Panc1 (cell line): ENCODE measurements at regions of chr3 and their contacts with region 1.

Region 1: GRCh38 chr3:96538186-96538585 is 276.2 kb upstream of the EPHA6 start:
- DNase-seq: no peak
- ATAC-seq: no peak
- H3K4me3 ChIP-seq: no peak overlapping the region
- H3K27ac ChIP-seq: no peak overlapping the region
- H3K4me1 ChIP-seq: no peaks in the 10 kb centered on the region
- H3K27me3 ChIP-seq: no peaks in the 10 kb centered on the region
- CTCF ChIP-seq: no peak

Region 2: DNA sequence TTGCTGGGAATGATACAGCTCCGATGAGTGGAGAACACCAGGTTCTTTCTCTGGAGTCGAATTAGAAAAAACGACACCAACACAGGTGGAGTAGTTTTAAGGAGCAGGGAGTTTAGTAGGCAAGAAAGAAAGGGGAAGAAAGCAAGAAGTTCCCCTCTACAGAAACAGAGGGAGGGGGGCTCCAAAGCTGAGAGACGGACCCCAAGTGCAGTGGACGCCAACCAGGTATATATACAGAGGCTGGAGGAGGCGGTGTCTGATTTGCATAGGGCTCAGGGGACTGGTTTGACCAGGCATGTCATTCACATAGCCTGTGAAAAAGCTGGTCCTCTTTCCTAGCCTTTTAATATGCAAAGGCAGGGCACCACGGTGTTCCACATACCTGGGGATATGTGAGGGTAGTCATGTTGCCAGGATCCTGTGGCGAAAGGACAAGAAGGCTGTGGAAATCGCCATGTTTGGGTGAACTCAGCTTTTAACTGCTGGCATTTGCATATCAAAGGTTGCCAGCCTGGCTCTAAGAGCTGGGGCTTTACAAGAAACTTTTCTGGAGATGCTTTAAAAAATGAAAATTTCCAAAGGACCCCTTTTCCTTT is 611.2 kb before region 1 on chr3:
- CTCF ChIA-PET with region 1: no interaction called
- POLR2A ChIA-PET with region 1: no interaction called
- in situ Hi-C with region 1: no loop called
- intact Hi-C with region 1: no loop called
- DNase-seq: no peak
- ATAC-seq: no peak
- H3K4me3 ChIP-seq: no peak overlapping the region
- H3K27ac ChIP-seq: no peak overlapping the region
- H3K4me1 ChIP-seq: no peaks in the 10 kb centered on the region
- H3K27me3 ChIP-seq: no peaks in the 10 kb centered on the region
- CTCF ChIP-seq: no peak

Region 3: DNA sequence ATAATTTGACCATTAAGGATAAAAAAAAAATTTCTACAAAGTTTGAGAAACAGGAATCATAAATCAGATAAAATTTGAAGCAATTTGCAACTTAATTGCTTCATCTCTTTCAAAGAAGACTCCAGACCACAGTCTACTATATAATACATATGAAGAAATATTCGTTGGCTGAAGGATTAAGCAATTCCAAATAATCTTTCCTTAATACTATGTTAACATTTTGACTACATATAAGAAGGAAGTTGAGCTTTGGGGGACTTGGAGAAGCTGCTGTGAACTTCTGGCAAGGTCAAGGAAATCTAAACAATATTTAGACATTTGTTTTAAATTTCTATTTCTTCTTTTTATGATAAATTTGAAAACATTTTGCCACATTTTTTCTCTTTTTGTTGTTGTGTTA is 1510.4 kb after region 1 on chr3:
- CTCF ChIA-PET with region 1: interaction called, 13 read pairs
- POLR2A ChIA-PET with region 1: no interaction called
- in situ Hi-C with region 1: no loop called
- intact Hi-C with region 1: no loop called
- DNase-seq: no peak
- ATAC-seq: no peak
- H3K4me3 ChIP-seq: no peak overlapping the region
- H3K27ac ChIP-seq: no peak overlapping the region
- H3K4me1 ChIP-seq: no peaks in the 10 kb centered on the region
- H3K27me3 ChIP-seq: no peaks in the 10 kb centered on the region; the same call in 1 of the 2 replicates
- CTCF ChIP-seq: no peak

Region 4: DNA sequence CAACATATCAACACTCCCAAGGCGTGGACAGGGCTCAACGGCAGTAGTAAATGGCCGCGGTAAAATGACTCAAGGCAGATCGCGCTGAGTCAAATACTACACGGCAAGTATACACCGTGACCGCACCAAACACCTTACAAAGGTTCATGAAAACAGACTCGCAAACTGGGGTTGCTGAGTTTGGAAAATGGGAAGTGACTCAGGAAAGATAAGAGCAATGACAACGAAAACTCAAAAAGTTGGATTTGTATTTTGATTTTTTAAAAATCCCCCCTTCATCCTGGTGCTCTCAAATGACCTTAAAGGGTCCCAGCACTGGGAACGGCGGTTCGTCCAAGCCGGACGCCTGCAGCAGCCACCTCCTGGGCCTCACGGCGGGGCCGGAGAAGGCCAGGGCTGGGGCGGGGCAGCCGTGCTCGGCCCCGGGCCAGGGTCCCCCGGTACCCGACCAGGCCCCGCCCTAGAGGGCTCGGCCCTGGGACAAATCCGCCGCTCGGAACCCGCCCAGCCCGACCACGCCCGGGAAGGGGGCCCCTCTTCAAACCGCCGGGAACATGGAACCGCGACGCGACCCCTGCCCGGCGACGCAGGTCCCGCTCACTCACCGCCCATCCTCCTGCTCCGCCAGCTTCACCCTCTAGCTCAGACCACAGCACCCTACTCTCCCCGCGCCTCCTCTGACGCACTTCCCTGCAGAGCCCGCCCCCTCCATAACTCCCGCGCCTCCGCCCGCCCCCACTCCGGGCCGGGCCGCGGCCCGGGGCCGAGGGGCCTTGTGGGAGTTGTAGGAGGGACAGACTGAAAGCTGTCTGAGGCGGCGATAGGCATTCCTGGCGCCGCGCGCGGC is 1984.3 kb after region 1 on chr3 and contains the start of gene CLDND1:
- CTCF ChIA-PET with region 1: no interaction called
- POLR2A ChIA-PET with region 1: no interaction called
- in situ Hi-C with region 1: no loop called
- intact Hi-C with region 1: no loop called
- DNase-seq: peak; percentile 92
- ATAC-seq: peak; percentile 100
- H3K4me3 ChIP-seq: peak within 1 kb of the TSS; percentile 77 to 98
- H3K27ac ChIP-seq: peak within 1 kb of the TSS; percentile 92
- H3K4me1 ChIP-seq: peaks cover 13% of the 10 kb centered on the region
- H3K27me3 ChIP-seq: no peaks in the 10 kb centered on the region
- CTCF ChIP-seq: no peak
- total RNA-seq, gene CLDND1: 77.3 TPM